Activated T-helper 1 cell treated with anti-CD3 and anti-CD28 coated beads, Interleukin-12 subunit alpha, Interleukin-12 subunit beta, Interleukin-2, Interleukin-4 antibody, amounts not matched to agents 30 ng/mL and 10 ng/mL and 1 ng/mL, durations not matched to agents 14 hours and 24 hours and 36 hours (primary cell): ENCODE measurements at regions of chr1 and their contacts with region 1.

Region 1: GRCh38 chr1:70221241-70222121 is at the start of gene SRSF11:
- DNase-seq: peak; percentile 95
- H3K4me3 Mint-ChIP-seq: peak within 1 kb of the TSS; percentile 93
- H3K27ac Mint-ChIP-seq: peak within 1 kb of the TSS; percentile 99
- H3K4me1 Mint-ChIP-seq: peaks cover 43% of the 10 kb centered on the region
- H3K27me3 Mint-ChIP-seq: no peaks in the 10 kb centered on the region
- total RNA-seq, gene SRSF11: 199 and 202 TPM in 2 replicates

Region 2: GRCh38 chr1:70134148-70134547 is 87.3 kb before region 1 on chr1:
- intact Hi-C with region 1: loop called (anchors 5 kb)
- DNase-seq: no peak
- H3K4me3 Mint-ChIP-seq: no peak overlapping the region
- H3K27ac Mint-ChIP-seq: no peak overlapping the region
- H3K4me1 Mint-ChIP-seq: peaks cover 6% of the 10 kb centered on the region
- H3K27me3 Mint-ChIP-seq: peaks cover 22% of the 10 kb centered on the region

Region 3: DNA sequence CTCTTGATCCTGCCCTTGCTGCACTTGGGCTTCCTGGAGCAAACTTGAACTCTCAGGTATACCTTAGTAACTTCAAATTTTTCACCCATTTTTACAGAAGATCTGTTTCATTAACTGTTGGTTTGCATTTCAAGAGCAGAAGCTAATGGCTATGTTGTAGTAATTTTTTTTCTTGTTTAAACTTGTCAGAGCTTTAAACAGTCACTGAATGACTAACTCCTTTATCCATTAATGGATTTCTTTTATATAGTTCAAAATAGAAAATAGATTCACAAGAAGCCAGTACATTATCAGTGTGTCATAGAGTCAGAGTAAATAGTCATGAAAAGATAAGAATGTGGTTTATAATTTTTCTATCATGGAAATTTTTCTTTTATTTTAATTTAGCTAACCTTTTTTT is 13.3 kb after region 1 on chr1:
- intact Hi-C with region 1: loop called (anchors 1 kb)
- DNase-seq: no peak
- H3K4me3 Mint-ChIP-seq: no peak overlapping the region
- H3K27ac Mint-ChIP-seq: no peak overlapping the region
- H3K4me1 Mint-ChIP-seq: peaks cover 11% of the 10 kb centered on the region
- H3K27me3 Mint-ChIP-seq: no peaks in the 10 kb centered on the region

Region 4: DNA sequence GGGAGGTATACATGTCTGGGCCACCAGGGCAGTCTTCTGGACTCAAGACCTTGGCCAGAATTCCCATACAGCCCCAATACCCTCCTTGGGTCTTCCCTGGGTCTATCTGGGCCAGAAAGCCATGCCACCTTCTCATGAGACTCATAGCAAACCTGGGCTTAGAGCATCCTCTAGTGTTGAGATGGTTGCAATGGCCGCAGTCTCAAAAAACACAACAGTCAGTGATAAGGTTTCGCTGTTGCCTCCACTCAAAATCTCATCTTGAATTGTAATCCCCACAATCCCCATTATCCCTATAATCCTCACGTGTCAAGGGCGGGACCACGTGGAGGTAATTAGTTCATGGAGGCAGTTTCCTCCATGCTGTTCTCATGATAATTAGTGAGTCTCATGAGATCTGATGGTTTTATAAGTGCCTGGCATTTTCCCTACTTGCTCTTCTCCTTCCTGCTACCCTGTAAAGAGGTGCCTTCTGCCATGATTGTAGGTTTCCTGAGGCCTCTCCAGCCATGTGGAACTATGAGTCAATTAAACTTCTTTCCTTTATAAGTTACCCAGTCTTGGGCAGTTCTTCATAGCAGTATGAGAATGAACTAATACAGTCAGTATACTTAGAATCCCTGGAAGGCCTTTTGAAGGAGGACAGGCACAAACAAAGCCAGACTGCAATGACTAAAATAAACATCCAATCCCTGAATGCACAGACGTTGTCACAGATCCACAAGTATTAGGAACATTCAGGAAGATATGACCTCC is 266.6 kb after region 1 on chr1:
- intact Hi-C with region 1: no loop called
- DNase-seq: no peak
- H3K4me3 Mint-ChIP-seq: no peak overlapping the region
- H3K27ac Mint-ChIP-seq: no peak overlapping the region
- H3K4me1 Mint-ChIP-seq: no peaks in the 10 kb centered on the region
- H3K27me3 Mint-ChIP-seq: peaks cover 15% of the 10 kb centered on the region

Region 5: DNA sequence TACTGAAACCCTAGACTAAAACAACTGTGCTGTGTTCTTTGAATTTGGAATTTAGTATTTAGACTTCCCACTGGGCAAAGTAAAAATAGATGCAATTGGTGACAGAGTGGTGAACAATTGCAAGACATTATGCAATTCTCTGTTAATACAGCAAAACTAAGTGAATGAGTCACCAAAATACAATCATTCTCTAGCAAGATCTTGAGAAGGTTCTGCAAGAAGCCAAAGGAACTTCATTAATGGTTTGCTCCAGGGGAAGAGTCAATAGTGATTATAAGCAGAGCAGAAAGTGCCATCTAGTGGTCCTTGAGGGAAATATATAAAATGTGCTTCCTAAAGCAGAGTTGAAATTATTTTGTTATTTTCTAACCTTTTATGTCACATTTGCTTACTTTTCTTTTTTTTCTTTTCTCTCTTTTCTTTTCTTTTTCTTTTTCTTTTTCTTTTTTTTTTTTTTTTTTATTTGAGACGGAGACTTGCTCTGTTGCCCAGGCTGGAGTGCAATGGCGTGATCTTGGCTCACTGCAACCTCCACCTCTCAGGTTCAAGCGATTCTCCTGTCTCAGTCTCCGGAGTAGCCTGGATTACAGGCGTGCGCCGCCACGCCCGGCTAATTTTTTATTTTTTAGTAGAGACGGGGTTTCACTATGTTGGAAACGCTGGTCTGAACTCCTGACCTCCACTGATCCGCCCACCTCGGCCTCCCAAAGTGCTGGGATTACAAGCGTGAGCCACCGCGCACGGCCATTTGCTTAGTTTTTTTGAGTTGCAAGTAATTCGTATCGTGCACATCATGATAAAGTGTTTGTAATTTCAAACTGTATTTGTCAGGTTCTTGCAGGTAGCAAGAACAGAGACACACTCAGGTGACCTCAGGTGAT is 288.8 kb after region 1 on chr1:
- intact Hi-C with region 1: loop called (anchors 2 kb)
- DNase-seq: no peak
- H3K4me3 Mint-ChIP-seq: no peak overlapping the region
- H3K27ac Mint-ChIP-seq: no peak overlapping the region
- H3K4me1 Mint-ChIP-seq: no peaks in the 10 kb centered on the region
- H3K27me3 Mint-ChIP-seq: peaks cover 4% of the 10 kb centered on the region